Ascending aorta (tissue), 2 donors: ENCODE measurements at regions of chr2 and their contacts with region 1.

Region 1: GRCh38 chr2:149145314-149146295 is 107.1 kb downstream of the LYPD6B start:
- DNase-seq: no peak
- H3K4me3 ChIP-seq: no peak overlapping the region
- H3K27ac ChIP-seq: no peak overlapping the region
- H3K4me1 ChIP-seq: no peaks in the 10 kb centered on the region
- H3K27me3 ChIP-seq: no peaks in the 10 kb centered on the region
- CTCF ChIP-seq: no peak

Region 2: GRCh38 chr2:149192427-149192826 is 46.8 kb after region 1 on chr2:
- intact Hi-C with region 1: loop called (anchors 5 kb)
- DNase-seq: no peak
- H3K4me3 ChIP-seq: no peak overlapping the region
- H3K27ac ChIP-seq: no peak overlapping the region
- H3K4me1 ChIP-seq: no peaks in the 10 kb centered on the region
- H3K27me3 ChIP-seq: no peaks in the 10 kb centered on the region
- CTCF ChIP-seq: no peak